ENCODE measurements at regions of chr1 and their contacts with region 1.

Region 1: GRCh38 chr1:89022167-89022959 is at the start of gene GBP3:
- DNase-seq: peak; percentile 37
- ATAC-seq: peak; percentile 79
- H3K4me3 Mint-ChIP-seq: peak within 1 kb of the TSS; percentile 79
- H3K27ac Mint-ChIP-seq: peak within 1 kb of the TSS; percentile 82
- H3K4me1 Mint-ChIP-seq: peaks cover 43% of the 10 kb centered on the region
- H3K27me3 Mint-ChIP-seq: no peaks in the 10 kb centered on the region
- total RNA-seq, gene GBP3: 16.7 to 18.9 TPM

Region 2: DNA sequence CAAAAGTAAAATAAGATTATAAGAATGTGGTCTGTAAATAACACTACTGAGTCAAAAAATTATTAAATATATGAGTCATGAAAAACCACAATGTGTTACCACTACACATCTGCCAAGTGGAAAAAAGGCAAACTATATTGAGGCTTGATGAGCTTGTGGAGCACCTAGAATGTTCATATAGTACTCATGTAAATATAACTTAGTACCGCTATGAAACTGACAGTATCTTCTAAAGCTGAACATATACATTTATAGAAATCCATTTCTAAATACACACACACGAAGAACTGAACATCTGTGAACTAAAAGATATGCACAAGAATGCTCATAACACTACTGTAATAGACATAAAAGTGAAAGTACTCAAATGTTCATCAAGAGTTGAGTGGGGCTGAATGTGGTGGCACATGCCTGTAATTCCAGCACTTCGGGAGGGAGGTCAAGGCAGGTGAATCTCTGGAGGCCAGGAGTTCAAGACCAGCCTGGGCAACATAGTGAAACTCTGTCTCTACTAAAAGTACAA is 18.8 kb after region 1 on chr1:
- CTCF ChIA-PET with region 1: interaction called, 5 read pairs
- POLR2A ChIA-PET with region 1: interaction called, 11 read pairs
- DNase-seq: no peak
- ATAC-seq: peak; percentile 59
- H3K4me3 Mint-ChIP-seq: no peak overlapping the region
- H3K27ac Mint-ChIP-seq: no peak overlapping the region
- H3K4me1 Mint-ChIP-seq: peaks cover 11% of the 10 kb centered on the region
- H3K27me3 Mint-ChIP-seq: no peaks in the 10 kb centered on the region

Region 3: GRCh38 chr1:89065079-89065868 is 42.9 kb after region 1 on chr1 and contains the start of gene GBP1:
- CTCF ChIA-PET with region 1: interaction called, 6 read pairs
- POLR2A ChIA-PET with region 1: interaction called, 11 read pairs
- DNase-seq: peak; percentile 43
- ATAC-seq: peak; percentile 82
- H3K4me3 Mint-ChIP-seq: peak within 1 kb of the TSS; percentile 90
- H3K27ac Mint-ChIP-seq: peak within 1 kb of the TSS; percentile 90
- H3K4me1 Mint-ChIP-seq: peaks cover 55% of the 10 kb centered on the region
- H3K27me3 Mint-ChIP-seq: no peaks in the 10 kb centered on the region
- total RNA-seq, gene GBP1: 146 to 147 TPM

Region 4: GRCh38 chr1:89269277-89269676 is 246.9 kb after region 1 on chr1:
- CTCF ChIA-PET with region 1: no interaction called
- POLR2A ChIA-PET with region 1: interaction called, 11 read pairs
- DNase-seq: no peak
- ATAC-seq: no peak
- H3K4me3 Mint-ChIP-seq: peak overlapping the region; percentile 96
- H3K27ac Mint-ChIP-seq: peak overlapping the region; percentile 71
- H3K4me1 Mint-ChIP-seq: peaks cover 54% of the 10 kb centered on the region
- H3K27me3 Mint-ChIP-seq: no peaks in the 10 kb centered on the region